ENCODE measurements at regions of chr13 and their contacts with region 1.

Region 1: GRCh38 chr13:49247643-49248621 is at the start of gene CDADC1:
- DNase-seq: peak; percentile 88 to 99
- H3K4me3 ChIP-seq: peak within 1 kb of the TSS; percentile 67 to 78
- H3K27ac ChIP-seq: peak within 1 kb of the TSS; percentile 81 to 93
- H3K4me1 ChIP-seq: peaks cover 0 to 5% of the 10 kb centered on the region in 2 donors
- H3K27me3 ChIP-seq: no peaks in the 10 kb centered on the region
- CTCF ChIP-seq: no peak
- total RNA-seq, gene CDADC1: 0.96 TPM

Region 2: DNA sequence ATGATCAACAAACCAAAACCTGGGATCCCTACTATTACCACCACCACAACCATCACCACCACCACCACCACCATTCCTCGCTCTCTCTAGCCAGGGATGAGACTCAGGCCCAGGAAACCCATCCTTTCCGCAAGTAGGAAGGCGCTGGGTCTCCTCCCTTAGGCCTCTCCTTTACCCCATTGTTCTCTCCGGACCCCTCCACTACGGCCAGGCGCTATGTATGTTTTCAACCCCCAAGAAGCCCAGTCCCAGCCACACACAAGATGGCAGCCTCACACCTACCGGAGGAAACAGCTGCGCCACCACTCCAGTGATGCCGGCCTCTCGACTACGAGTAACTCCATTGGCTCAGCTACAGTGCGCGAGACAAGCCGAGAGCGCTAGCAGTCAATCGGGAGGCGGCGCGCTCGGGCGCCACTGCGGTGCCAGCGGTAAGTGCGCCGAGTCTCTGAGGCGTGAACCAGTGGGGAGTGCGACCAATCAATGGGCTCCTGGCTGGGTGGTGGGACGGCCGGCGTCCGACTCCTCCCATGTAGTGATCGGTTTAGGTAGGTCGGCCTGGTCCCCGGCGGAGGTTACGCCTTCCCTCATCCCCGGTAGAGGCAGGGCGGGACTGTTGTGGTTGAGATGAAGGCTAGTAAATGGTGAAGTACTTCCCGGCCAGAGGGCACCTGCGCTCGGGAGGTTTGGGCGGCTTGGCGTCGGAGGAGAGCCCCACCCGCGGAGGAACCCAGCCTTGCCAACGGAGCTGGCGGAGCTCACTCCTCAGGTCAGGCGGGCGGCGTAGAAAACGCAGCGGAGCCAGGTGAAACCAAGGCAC is 196.0 kb after region 1 on chr13 and contains the starts of genes CAB39L and SETDB2:
- intact Hi-C with region 1: loop called (anchors 5 kb)
- DNase-seq: peak; percentile 99 to 100
- H3K4me3 ChIP-seq: peak within 1 kb of the TSS; percentile 75 to 84
- H3K27ac ChIP-seq: peak within 1 kb of the TSS; percentile 96 to 99
- H3K4me1 ChIP-seq: peaks cover 2 to 20% of the 10 kb centered on the region in 2 donors
- H3K27me3 ChIP-seq: no peaks in the 10 kb centered on the region
- CTCF ChIP-seq: peak; percentile 26 to 45 (median 42)
- total RNA-seq, gene CAB39L: 30.1 TPM
- total RNA-seq, gene SETDB2: 7.2 TPM

Measured in ascending aorta (tissue), 2 donors.